CD4-positive, alpha-beta T cell (primary cell): ENCODE measurements at regions of chr5 and their contacts with region 1.

Region 1: DNA sequence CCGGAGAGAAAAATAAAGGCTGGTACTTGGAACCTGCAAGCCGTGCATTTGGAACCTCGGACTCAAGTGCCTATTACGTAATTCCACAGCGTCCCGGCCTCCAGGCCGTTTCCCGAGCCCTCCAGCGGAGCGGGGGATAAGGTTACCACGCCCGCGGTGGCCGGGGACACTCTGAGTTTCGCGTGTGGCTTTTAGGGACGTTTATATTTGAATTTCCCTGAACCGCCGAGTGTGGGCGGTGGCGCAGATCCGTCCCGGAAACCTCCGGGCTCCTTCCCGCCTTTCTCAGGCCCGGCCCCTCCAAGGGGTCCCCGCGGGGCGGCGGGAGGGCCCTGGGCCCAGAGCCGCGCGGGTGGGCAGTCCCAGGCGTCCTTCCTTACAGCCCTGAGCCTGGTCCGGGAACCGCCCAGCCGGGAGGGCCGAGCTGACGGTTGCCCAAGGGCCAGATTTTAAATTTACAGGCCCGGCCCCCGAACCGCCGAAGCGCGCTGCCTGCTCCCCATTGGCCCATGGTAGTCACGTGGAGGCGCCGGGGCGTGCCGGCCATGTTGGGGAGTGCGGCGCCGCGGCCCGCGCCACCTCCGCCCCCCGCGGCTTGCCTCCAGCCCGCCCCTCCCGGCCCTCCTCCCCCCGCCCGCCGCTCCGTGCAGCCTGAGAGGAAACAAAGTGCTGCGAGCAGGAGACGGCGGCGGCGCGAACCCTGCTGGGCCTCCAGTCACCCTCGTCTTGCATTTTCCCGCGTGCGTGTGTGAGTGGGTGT is at the start of gene LMNB1:
- DNase-seq: peak; percentile 87 to 97 (median 92)
- ATAC-seq: peak; percentile 66
- H3K4me3 ChIP-seq: peak within 1 kb of the TSS; percentile 97
- H3K4me3 Mint-ChIP-seq: peak within 1 kb of the TSS; percentile 87
- H3K27ac ChIP-seq: peak within 1 kb of the TSS; percentile 77 to 96
- H3K27ac Mint-ChIP-seq: peak within 1 kb of the TSS; percentile 93
- H3K4me1 ChIP-seq: peaks cover 28% of the 10 kb centered on the region
- H3K4me1 Mint-ChIP-seq: peaks cover 23% of the 10 kb centered on the region
- H3K27me3 ChIP-seq: no peaks in the 10 kb centered on the region
- H3K27me3 Mint-ChIP-seq: no peaks in the 10 kb centered on the region
- CTCF ChIP-seq: peak; percentile 16
- total RNA-seq, gene LMNB1: 30.6 to 31.1 TPM

Region 2: GRCh38 chr5:126594676-126595485 is 181.8 kb before region 1 on chr5 and contains the start of gene ALDH7A1:
- CTCF ChIA-PET with region 1: no interaction called
- POLR2A ChIA-PET with region 1: interaction called, 11 read pairs
- intact Hi-C with region 1: loop called (anchors 1 to 2 kb)
- DNase-seq: peak in 11 of 14 experiments; percentile 2 to 68 (median 30)
- ATAC-seq: peak; percentile 70
- H3K4me3 ChIP-seq: peak within 1 kb of the TSS; percentile 69
- H3K4me3 Mint-ChIP-seq: peak within 1 kb of the TSS; percentile 91
- H3K27ac ChIP-seq: no peak within 1 kb of the TSS
- H3K27ac Mint-ChIP-seq: peak within 1 kb of the TSS; percentile 9
- H3K4me1 ChIP-seq: peaks cover 16% of the 10 kb centered on the region
- H3K4me1 Mint-ChIP-seq: peaks cover 18% of the 10 kb centered on the region
- H3K27me3 ChIP-seq: peaks cover 4 to 5% of the 10 kb centered on the region in 2 experiments
- H3K27me3 Mint-ChIP-seq: no peaks in the 10 kb centered on the region
- CTCF ChIP-seq: no peak
- total RNA-seq, gene ALDH7A1: 1.6 to 2.1 TPM

Region 3: DNA sequence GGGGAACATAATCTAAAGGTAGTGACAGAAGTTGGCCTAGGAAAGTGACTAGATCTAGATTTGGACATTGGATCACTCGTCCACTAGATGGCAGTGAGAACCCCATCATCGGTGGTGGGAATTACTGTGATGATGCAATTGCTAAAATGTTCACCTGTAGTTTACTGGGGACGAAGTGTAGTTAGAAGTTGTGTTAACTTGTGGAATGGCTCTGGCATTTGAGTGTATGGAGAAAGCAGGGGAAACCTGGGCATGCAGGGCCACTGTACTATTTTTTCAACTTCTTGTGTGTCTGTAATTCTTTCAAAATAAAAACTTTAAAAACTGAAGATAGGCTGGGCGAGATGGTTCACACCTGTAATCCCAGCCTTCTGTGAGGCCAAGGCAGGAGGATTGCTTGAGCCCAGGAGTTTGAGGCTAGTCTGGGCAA is 100.5 kb before region 1 on chr5:
- CTCF ChIA-PET with region 1: interaction called, 49 read pairs
- POLR2A ChIA-PET with region 1: interaction called, 46 read pairs
- intact Hi-C with region 1: loop called (anchors 1 kb)
- DNase-seq: peak; percentile 39 to 86 (median 54)
- ATAC-seq: peak; percentile 90
- H3K4me3 ChIP-seq: no peak overlapping the region
- H3K4me3 Mint-ChIP-seq: no peak overlapping the region
- H3K27ac ChIP-seq: no peak overlapping the region
- H3K27ac Mint-ChIP-seq: no peak overlapping the region
- H3K4me1 ChIP-seq: peaks cover 4% of the 10 kb centered on the region
- H3K4me1 Mint-ChIP-seq: peaks cover 5% of the 10 kb centered on the region
- H3K27me3 ChIP-seq: no peaks in the 10 kb centered on the region
- H3K27me3 Mint-ChIP-seq: no peaks in the 10 kb centered on the region
- CTCF ChIP-seq: peak; percentile 82

Region 4: DNA sequence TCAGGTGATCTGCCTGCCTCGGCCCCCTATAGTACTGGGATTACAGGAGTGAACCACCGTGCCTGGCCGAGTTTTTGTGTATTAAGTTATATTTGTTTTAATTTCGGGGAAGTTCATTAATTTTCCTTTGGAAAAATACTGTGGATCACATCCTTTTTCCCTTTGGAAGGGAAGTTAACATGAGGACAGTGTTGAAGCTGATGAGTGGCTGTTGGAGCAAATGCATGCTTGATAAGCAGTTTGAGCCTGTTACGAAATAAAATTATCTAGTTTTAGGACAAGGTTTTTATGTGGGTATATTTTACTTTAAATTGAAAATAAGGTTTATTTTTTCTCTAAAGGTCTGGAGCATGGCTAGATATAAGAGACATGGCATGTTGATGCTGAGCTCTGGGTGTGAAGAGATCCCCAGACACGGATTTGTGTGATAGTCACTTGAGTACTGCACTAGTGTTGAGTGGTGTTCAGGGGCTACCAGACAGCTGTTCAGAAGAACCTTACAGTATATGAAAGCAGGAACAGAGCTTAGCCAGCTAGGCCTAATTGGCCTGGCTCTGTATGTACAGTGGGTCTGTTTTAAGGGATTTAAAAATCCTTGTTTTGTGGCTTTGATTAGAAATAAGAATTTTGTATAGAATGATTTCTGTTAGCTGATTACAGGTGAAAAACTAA is 17.6 kb after region 1 on chr5:
- CTCF ChIA-PET with region 1: interaction called, 7 read pairs
- POLR2A ChIA-PET with region 1: interaction called, 10 read pairs
- intact Hi-C with region 1: no loop called
- DNase-seq: no peak
- ATAC-seq: no peak
- H3K4me3 ChIP-seq: no peak overlapping the region
- H3K4me3 Mint-ChIP-seq: no peak overlapping the region
- H3K27ac ChIP-seq: no peak overlapping the region
- H3K27ac Mint-ChIP-seq: no peak overlapping the region
- H3K4me1 ChIP-seq: peaks cover 15% of the 10 kb centered on the region
- H3K4me1 Mint-ChIP-seq: peaks cover 52% of the 10 kb centered on the region
- H3K27me3 ChIP-seq: no peaks in the 10 kb centered on the region
- H3K27me3 Mint-ChIP-seq: no peaks in the 10 kb centered on the region
- CTCF ChIP-seq: no peak

Region 5: DNA sequence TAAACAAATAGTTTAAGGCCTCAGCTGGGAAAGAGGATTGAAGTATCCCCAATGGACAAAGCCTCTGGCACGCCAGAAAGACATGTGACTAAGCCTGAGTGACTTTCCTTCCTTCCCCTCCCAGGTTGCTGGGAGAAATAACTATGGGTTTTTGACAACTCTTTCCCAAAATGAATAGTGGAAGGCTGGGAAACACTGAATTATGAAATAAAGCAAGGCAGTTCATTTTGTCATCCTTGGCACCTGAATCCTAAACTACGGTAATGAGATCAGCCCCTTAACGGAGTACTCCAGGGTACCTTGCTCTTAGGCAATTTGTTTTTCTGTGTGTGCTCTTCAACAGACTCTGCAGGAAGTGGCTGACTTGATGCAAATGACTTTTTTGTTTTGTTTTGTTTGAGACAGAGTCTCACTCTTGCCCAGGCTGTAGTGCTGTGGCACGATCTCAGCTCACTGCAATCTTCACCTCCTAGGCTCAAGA is 75.5 kb after region 1 on chr5:
- CTCF ChIA-PET with region 1: no interaction called
- POLR2A ChIA-PET with region 1: interaction called, 50 read pairs
- intact Hi-C with region 1: no loop called
- DNase-seq: peak in 8 of 14 experiments; percentile 6 to 64 (median 44)
- ATAC-seq: peak; percentile 81
- H3K4me3 ChIP-seq: peak overlapping the region; percentile 1
- H3K4me3 Mint-ChIP-seq: peak overlapping the region; percentile 93
- H3K27ac ChIP-seq: peak overlapping the region; percentile 64 to 78
- H3K27ac Mint-ChIP-seq: peak overlapping the region; percentile 100
- H3K4me1 ChIP-seq: peaks cover 42% of the 10 kb centered on the region
- H3K4me1 Mint-ChIP-seq: peaks cover 64% of the 10 kb centered on the region
- H3K27me3 ChIP-seq: no peaks in the 10 kb centered on the region
- H3K27me3 Mint-ChIP-seq: no peaks in the 10 kb centered on the region
- CTCF ChIP-seq: no peak

Region 6: DNA sequence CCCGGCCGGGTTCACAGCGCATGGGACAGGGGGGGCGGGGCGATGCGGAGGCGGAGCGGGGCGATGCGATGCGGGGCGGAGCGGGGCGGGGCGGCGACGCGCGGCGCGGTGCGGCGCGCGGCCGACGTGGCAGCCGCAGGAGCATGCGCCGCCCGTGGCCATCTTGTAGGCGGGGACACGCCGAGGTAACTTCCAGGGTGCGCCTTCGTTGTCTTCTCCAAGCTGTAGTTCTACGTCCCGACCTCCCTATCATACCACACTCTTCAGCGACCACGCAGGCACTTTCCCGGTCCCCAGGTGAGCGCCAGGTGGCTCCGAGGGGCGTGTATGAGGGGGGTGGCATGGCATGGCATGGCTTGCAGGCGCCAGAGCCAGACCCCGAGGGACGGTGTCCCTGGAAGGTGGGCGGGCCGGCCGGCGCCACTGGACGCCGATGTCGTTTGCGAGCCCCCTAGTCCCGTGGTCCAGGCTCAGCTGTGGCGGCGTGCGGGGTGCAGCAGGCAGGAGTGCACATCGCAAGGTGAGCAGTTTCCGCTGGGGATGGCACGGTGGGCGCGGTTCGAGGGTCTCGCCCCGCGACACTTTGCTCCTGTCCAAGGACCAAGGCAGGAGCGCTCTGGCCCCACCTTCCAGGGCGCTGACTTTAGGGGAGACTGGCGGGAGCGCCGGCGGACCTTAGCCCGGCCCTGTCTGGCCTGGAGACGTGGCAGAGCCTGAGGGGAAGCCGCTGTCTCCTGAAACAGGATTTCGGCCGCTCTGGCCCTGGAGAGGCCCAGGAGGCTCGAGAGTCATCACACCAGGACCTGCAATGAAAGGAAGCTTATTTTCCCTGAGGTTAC is 741.0 kb after region 1 on chr5 and contains the start of gene PRRC1:
- CTCF ChIA-PET with region 1: no interaction called
- POLR2A ChIA-PET with region 1: interaction called, 10 read pairs
- intact Hi-C with region 1: no loop called
- DNase-seq: peak; percentile 64 to 92 (median 76)
- ATAC-seq: peak; percentile 94
- H3K4me3 ChIP-seq: peak within 1 kb of the TSS; percentile 97
- H3K4me3 Mint-ChIP-seq: peak within 1 kb of the TSS; percentile 97
- H3K27ac ChIP-seq: peak within 1 kb of the TSS; percentile 68 to 76
- H3K27ac Mint-ChIP-seq: peak within 1 kb of the TSS; percentile 82
- H3K4me1 ChIP-seq: peaks cover 15% of the 10 kb centered on the region
- H3K4me1 Mint-ChIP-seq: peaks cover 44% of the 10 kb centered on the region
- H3K27me3 ChIP-seq: no peaks in the 10 kb centered on the region
- H3K27me3 Mint-ChIP-seq: peaks cover 6% of the 10 kb centered on the region
- CTCF ChIP-seq: no peak
- total RNA-seq, gene PRRC1: 32.0 to 33.8 TPM